Activated CD4-positive, alpha-beta T cell treated with anti-CD3 and anti-CD28 coated beads for 36 hours (primary cell): ENCODE measurements at regions of chr16 and their contacts with region 1.

Region 1: GRCh38 chr16:81567987-81568748 is 123.6 kb downstream of the CMIP start:
- DNase-seq: peak; percentile 85
- ATAC-seq: peak; percentile 98
- H3K4me3 Mint-ChIP-seq: peak overlapping the region; percentile 20
- H3K27ac Mint-ChIP-seq: peak overlapping the region; percentile 92
- H3K4me1 Mint-ChIP-seq: peaks cover 34% of the 10 kb centered on the region
- H3K27me3 Mint-ChIP-seq: no peaks in the 10 kb centered on the region

Region 2: GRCh38 chr16:81595604-81596292 is 27.6 kb after region 1 on chr16:
- CTCF ChIA-PET with region 1: no interaction called
- POLR2A ChIA-PET with region 1: no interaction called
- intact Hi-C with region 1: loop called in 1 of 2 experiments (anchors 1 kb)
- DNase-seq: no peak
- ATAC-seq: peak; percentile 69
- H3K4me3 Mint-ChIP-seq: no peak overlapping the region
- H3K27ac Mint-ChIP-seq: peak overlapping the region; percentile 51
- H3K4me1 Mint-ChIP-seq: peaks cover 22% of the 10 kb centered on the region
- H3K27me3 Mint-ChIP-seq: no peaks in the 10 kb centered on the region

Region 3: GRCh38 chr16:81632392-81633146 is 64.4 kb after region 1 on chr16:
- CTCF ChIA-PET with region 1: interaction called, 4 read pairs
- POLR2A ChIA-PET with region 1: no interaction called
- intact Hi-C with region 1: loop called in 1 of 2 experiments (anchors 1 kb)
- DNase-seq: peak; percentile 90
- ATAC-seq: peak; percentile 81
- H3K4me3 Mint-ChIP-seq: peak overlapping the region; percentile 47
- H3K27ac Mint-ChIP-seq: peak overlapping the region; percentile 97
- H3K4me1 Mint-ChIP-seq: peaks cover 67% of the 10 kb centered on the region
- H3K27me3 Mint-ChIP-seq: no peaks in the 10 kb centered on the region